Endothelial cell of umbilical vein (primary cell): ENCODE measurements at regions of chr17 and their contacts with region 1.

Region 1: DNA sequence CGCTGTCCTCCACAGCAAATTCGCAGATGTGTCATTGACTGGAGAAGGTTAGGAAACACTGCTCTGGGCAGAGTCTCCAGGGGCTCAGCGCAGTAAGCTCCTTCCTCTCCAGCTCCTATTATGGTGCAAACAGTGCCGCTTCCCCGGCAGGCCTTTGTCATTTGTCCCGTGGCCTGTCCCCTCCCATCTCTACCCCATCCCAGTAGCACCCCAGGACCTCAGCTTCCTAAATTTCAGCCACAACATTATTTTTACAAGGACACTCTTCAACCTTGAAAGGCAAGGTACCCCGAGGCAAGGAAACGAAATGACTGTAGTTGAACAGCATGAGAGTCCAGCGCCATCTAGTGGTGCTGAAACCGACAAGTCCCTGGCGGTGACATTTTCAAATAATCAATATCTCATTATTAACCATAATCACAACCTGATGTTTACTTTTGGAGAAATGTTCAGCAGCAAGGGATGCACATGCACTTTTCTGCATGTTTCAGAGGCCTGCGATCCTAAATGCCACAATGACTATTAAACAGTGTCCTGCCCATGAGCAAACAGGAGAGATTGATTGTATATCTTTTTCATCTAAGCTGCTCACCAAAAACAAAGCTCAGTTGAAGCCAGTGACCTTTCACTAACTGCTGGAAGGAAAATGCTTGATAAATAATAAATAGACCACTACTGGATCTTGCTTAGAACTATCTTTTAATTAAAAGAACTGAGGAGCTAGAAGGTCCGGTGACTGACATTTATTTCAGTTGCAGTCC is 16.5 kb downstream of the MRPS23 start:
- DNase-seq: peak; percentile 72
- H3K4me3 ChIP-seq: peak overlapping the region in 2 of 3 experiments; percentile 23 to 54
- H3K27ac ChIP-seq: no peak overlapping the region
- H3K4me1 ChIP-seq: no peaks in the 10 kb centered on the region
- H3K27me3 ChIP-seq: no peaks in the 10 kb centered on the region
- CTCF ChIP-seq: peak; percentile 83 to 96
- POLR2A ChIP-seq: no peak

Region 2: DNA sequence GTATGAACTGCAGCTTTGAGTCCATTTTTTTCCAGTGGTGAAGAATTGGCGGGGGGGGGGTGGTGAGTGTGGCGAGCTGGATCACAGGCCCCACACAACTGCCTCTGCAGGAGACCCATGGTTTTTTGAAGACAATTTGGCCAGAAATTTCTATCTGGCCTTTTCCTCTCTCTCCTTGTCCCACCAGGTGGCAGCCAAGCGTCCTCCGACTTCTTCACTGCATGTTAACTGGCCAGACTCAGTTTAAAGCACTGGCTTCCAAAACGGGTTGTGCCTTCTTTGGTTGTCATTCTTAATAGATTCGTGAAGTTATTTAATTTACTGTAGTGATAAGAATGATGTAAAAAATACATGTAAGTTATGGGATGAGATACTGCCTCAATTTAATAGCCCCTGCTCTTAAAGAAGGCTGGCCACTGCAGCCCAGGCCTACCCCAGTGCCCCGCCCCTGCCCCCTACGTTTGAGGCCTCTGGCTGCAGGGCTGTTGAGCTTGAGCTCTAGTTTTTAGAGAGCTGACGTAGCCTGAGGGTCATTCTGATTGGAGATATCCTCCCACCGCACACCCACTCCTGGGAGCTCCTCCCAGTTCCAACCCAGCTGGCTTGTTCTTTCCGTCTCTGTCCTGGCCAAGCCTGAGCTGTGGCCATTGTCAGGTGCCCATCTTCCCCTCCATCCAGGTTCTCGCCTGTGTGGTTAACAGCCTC is 711.9 kb before region 1 on chr17:
- CTCF ChIA-PET with region 1: interaction called, 36 read pairs
- POLR2A ChIA-PET with region 1: interaction called, 6 read pairs
- dilution Hi-C with region 1: no loop called
- intact Hi-C with region 1: loop called (anchors 1 kb)
- DNase-seq: peak; percentile 29
- H3K4me3 ChIP-seq: no peak overlapping the region
- H3K27ac ChIP-seq: no peak overlapping the region
- H3K4me1 ChIP-seq: no peaks in the 10 kb centered on the region
- H3K27me3 ChIP-seq: no peaks in the 10 kb centered on the region
- CTCF ChIP-seq: peak; percentile 29 to 64
- POLR2A ChIP-seq: no peak

Region 3: GRCh38 chr17:57440522-57441485 is 392.6 kb before region 1 on chr17:
- CTCF ChIA-PET with region 1: no interaction called
- POLR2A ChIA-PET with region 1: no interaction called
- dilution Hi-C with region 1: no loop called
- intact Hi-C with region 1: loop called (anchors 5 kb)
- DNase-seq: peak; percentile 55
- H3K4me3 ChIP-seq: no peak overlapping the region
- H3K27ac ChIP-seq: no peak overlapping the region
- H3K4me1 ChIP-seq: peaks cover 21% of the 10 kb centered on the region
- H3K27me3 ChIP-seq: no peaks in the 10 kb centered on the region
- CTCF ChIP-seq: peak; percentile 43 to 58
- POLR2A ChIP-seq: no peak

Region 4: GRCh38 chr17:57671667-57672632 is 161.4 kb before region 1 on chr17:
- CTCF ChIA-PET with region 1: interaction called, 16 read pairs
- POLR2A ChIA-PET with region 1: no interaction called
- dilution Hi-C with region 1: no loop called
- intact Hi-C with region 1: no loop called
- DNase-seq: peak; percentile 55
- H3K4me3 ChIP-seq: no peak overlapping the region
- H3K27ac ChIP-seq: no peak overlapping the region
- H3K4me1 ChIP-seq: no peaks in the 10 kb centered on the region
- H3K27me3 ChIP-seq: no peaks in the 10 kb centered on the region
- CTCF ChIP-seq: peak; percentile 91 to 94
- POLR2A ChIP-seq: no peak

Region 5: DNA sequence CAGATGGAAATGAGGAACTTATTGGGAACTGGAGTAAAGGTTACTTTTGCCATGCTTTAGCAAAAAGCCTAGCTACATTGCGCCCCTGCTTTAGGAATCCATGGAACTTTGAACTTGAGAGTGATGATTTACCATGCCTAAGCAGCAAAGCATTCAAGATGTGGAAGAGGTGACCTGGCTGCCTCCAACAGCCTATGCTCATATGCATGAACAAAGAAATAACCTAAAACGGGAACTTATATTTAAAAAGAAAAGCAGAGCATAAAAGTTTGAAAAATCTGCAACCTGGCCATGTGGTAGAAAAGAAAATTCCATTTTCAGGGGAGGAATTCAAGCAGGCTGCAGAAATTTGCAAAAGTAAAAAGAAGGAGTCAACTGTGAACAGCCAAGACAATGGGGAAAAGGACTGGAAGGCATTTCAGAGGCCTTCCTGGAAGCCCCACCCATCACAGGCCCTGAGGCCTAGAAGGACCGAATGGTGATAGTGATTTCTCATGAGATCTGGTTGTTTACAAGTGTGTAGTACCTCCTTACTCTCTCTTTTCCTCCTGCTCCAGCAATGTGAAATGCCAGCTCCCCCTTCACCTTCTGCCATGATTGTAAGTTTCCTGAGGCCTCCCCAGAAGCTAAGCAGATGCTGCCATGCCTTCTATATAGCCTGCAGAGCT is 32.2 kb before region 1 on chr17:
- CTCF ChIA-PET with region 1: interaction called, 17 read pairs
- POLR2A ChIA-PET with region 1: no interaction called
- dilution Hi-C with region 1: no loop called
- intact Hi-C with region 1: no loop called
- DNase-seq: no peak
- H3K4me3 ChIP-seq: no peak overlapping the region
- H3K27ac ChIP-seq: no peak overlapping the region
- H3K4me1 ChIP-seq: no peaks in the 10 kb centered on the region
- H3K27me3 ChIP-seq: peaks cover 0 to 2% of the 10 kb centered on the region in 2 experiments
- CTCF ChIP-seq: no peak
- POLR2A ChIP-seq: no peak

Region 6: DNA sequence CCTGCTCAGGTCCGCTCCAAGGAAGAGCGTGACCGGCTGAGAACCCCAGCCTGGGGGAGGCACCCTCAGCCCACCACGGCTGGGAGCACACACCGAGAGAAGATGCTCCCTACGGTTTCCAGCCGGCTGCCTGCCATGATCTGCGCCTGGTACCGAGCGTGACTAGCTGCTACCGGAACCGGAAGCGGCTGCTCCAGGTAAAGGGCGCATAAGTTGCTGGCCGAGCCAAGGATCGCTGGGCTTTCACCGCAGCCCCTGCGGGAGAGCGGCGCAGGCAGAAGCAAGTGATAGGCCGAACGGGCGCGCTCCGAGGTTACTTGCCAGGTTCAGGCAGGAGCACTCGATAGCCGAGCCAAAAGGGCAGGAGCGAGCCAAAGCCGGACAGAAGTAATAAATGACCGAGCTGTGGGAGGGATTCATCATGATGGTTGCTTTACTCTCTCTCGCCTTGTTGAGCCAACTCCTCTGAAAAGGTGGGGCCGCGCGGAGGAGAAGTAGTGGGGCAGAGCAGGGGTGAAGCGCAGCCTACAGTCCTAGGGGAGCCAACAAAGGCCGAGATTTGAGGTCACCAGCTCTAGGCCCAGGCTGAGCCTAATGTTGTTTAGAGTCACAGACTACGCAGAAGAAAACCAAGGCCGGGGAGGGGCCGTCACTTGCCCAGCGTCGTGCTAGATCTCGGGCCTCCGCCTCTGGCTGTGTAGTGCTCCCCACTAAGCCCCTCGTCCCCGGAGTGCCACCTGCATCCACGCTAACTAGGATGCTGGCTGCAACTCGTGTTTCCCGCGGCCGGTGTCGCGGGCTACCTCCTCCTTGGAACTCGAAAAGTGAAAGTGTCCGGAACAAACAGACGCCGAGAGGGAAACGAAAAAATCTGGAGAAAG is 16.8 kb after region 1 on chr17 and contains the start of gene MRPS23:
- CTCF ChIA-PET with region 1: interaction called, 18 read pairs
- POLR2A ChIA-PET with region 1: no interaction called
- dilution Hi-C with region 1: no loop called
- intact Hi-C with region 1: no loop called
- DNase-seq: peak; percentile 99
- H3K4me3 ChIP-seq: peak within 1 kb of the TSS; percentile 50 to 81 (median 52)
- H3K27ac ChIP-seq: peak within 1 kb of the TSS; percentile 66
- H3K4me1 ChIP-seq: peaks cover 14% of the 10 kb centered on the region
- H3K27me3 ChIP-seq: no peaks in the 10 kb centered on the region
- CTCF ChIP-seq: no peak
- POLR2A ChIP-seq: peak; percentile 80
- total RNA-seq, gene MRPS23: 40.7 and 46.2 TPM in 2 replicates